Activated CD4-positive, alpha-beta T cell treated with anti-CD3 and anti-CD28 coated beads for 36 hours (primary cell): ENCODE measurements at regions of chr21 and their contacts with region 1.

Region 1: DNA sequence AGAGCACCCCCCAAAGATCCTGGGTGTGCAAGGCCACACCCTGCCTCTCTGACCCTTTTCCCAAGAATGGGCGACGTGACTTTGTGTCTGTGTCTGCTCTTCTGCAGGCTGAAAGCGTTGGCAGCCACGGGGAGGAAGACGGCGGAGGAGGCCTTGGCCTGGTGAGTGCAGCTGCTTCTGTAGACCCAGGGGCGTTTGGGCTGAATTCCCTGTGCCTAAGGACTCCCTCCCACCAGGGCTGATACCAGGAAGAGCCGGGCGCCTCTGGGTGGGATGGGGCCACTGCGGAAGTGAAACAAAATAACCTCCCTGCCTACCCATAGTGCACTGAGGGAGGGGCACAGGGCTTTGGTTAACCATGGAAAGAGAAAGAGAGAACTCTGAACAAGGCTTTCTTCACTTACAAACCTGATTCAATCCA is 2.5 kb downstream of the UBASH3A start:
- DNase-seq: peak; percentile 85
- ATAC-seq: peak; percentile 75
- H3K4me3 Mint-ChIP-seq: peak overlapping the region; percentile 99
- H3K27ac Mint-ChIP-seq: peak overlapping the region; percentile 98
- H3K4me1 Mint-ChIP-seq: peaks cover 42% of the 10 kb centered on the region
- H3K27me3 Mint-ChIP-seq: no peaks in the 10 kb centered on the region

Region 2: GRCh38 chr21:41316200-41317062 is 1089.8 kb before region 1 on chr21 and contains the start of gene FAM3B:
- CTCF ChIA-PET with region 1: no interaction called
- POLR2A ChIA-PET with region 1: no interaction called
- intact Hi-C with region 1: no loop called
- DNase-seq: peak; percentile 13
- ATAC-seq: no peak
- H3K4me3 Mint-ChIP-seq: no peak within 1 kb of the TSS
- H3K27ac Mint-ChIP-seq: no peak within 1 kb of the TSS
- H3K4me1 Mint-ChIP-seq: peaks cover 13% of the 10 kb centered on the region
- H3K27me3 Mint-ChIP-seq: peaks cover 30% of the 10 kb centered on the region
- total RNA-seq, gene FAM3B: not detected

Region 3: GRCh38 chr21:42187976-42188653 is 218.1 kb before region 1 on chr21:
- CTCF ChIA-PET with region 1: no interaction called
- POLR2A ChIA-PET with region 1: no interaction called
- intact Hi-C with region 1: no loop called
- DNase-seq: peak; percentile 88
- ATAC-seq: peak; percentile 93
- H3K4me3 Mint-ChIP-seq: peak overlapping the region; percentile 57
- H3K27ac Mint-ChIP-seq: peak overlapping the region; percentile 95
- H3K4me1 Mint-ChIP-seq: peaks cover 65% of the 10 kb centered on the region
- H3K27me3 Mint-ChIP-seq: peaks cover 2% of the 10 kb centered on the region

Region 4: GRCh38 chr21:42350896-42351543 is 55.2 kb before region 1 on chr21 and contains the start of gene TFF2:
- CTCF ChIA-PET with region 1: no interaction called
- POLR2A ChIA-PET with region 1: no interaction called
- intact Hi-C with region 1: no loop called
- DNase-seq: no peak
- ATAC-seq: no peak
- H3K4me3 Mint-ChIP-seq: no peak within 1 kb of the TSS
- H3K27ac Mint-ChIP-seq: no peak within 1 kb of the TSS
- H3K4me1 Mint-ChIP-seq: no peaks in the 10 kb centered on the region
- H3K27me3 Mint-ChIP-seq: no peaks in the 10 kb centered on the region
- total RNA-seq, gene TFF2: not detected

Region 5: GRCh38 chr21:42374864-42375492 is 31.2 kb before region 1 on chr21:
- CTCF ChIA-PET with region 1: interaction called, 6 read pairs
- POLR2A ChIA-PET with region 1: interaction called, 15 read pairs
- intact Hi-C with region 1: loop called in 1 of 2 experiments (anchors 5 kb)
- DNase-seq: peak; percentile 47
- ATAC-seq: peak; percentile 31
- H3K4me3 Mint-ChIP-seq: peak overlapping the region; percentile 57
- H3K27ac Mint-ChIP-seq: peak overlapping the region; percentile 92
- H3K4me1 Mint-ChIP-seq: peaks cover 50% of the 10 kb centered on the region
- H3K27me3 Mint-ChIP-seq: no peaks in the 10 kb centered on the region

Region 6: DNA sequence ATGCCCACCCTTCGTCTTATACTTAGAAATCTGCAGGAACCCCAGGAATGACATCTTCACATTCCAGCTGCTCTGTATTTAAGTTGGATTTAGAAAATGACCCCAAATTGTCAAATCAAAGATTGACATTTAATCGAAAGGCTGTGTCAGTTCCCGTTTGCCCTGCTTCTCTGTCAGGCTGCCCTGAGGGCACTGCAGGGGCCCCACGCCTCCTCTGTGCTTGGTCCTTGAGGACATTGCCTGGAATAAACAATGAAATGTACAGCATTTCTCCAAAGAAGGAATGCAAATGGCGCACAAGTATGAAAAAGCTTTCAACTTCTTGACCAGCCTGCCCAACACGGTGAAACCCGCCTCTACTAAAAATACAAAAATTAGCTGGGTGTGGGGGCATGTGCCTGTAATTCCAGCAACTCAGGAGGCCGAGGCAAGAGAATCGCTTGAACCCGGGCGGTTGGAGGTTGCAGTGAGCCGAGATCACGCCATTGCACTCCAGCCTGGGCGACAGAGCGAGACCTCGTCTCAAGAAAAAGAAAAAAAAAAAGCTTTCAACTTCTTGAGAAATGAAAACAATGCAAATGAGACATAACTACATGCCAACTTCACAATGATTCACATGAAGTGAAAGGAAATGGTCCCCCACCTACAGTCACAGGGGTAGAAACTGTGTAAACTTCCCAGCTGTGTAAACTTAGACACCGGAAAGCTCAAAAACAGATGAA is 13.3 kb before region 1 on chr21:
- CTCF ChIA-PET with region 1: interaction called, 17 read pairs
- POLR2A ChIA-PET with region 1: interaction called, 19 read pairs
- intact Hi-C with region 1: loop called (anchors 1 kb)
- DNase-seq: peak; percentile 69
- ATAC-seq: peak; percentile 94
- H3K4me3 Mint-ChIP-seq: peak overlapping the region; percentile 62
- H3K27ac Mint-ChIP-seq: peak overlapping the region; percentile 89
- H3K4me1 Mint-ChIP-seq: peaks cover 84% of the 10 kb centered on the region
- H3K27me3 Mint-ChIP-seq: no peaks in the 10 kb centered on the region

Region 7: GRCh38 chr21:42424914-42425541 is 18.8 kb after region 1 on chr21:
- CTCF ChIA-PET with region 1: interaction called, 56 read pairs
- POLR2A ChIA-PET with region 1: interaction called, 15 read pairs
- intact Hi-C with region 1: loop called (anchors 1 to 2 kb)
- DNase-seq: peak; percentile 78
- ATAC-seq: peak; percentile 55
- H3K4me3 Mint-ChIP-seq: peak overlapping the region; percentile 64
- H3K27ac Mint-ChIP-seq: peak overlapping the region; percentile 87
- H3K4me1 Mint-ChIP-seq: peaks cover 74% of the 10 kb centered on the region
- H3K27me3 Mint-ChIP-seq: no peaks in the 10 kb centered on the region

Region 8: DNA sequence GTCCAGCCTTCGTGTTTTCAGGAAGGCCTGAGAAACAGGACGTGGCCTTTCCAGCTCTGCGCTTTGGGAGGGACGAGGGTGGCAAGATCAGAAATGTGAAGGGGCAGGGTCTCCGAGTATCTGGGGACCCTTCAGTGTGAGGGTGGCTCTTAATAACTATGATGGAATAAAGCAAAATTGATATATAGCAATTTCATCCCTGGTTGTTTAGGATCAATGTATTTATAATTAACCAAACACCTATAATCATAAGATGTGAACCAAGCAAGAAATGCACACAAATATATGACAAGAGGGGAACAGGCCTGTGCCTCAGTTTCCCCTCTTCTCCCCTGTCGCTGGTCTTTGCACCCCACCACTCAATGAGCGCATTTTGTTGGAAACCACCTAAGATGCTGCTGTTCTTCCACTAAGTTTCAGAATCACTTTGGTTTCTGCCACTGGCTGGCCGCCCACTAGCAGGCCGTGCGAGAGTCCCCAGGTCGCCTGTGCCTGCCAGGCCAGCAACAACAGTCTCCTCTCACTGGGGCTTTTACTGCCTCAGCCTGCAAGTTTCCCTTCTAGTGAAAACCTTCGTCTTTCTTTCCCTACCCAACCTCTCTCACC is 34.1 kb after region 1 on chr21:
- CTCF ChIA-PET with region 1: no interaction called
- POLR2A ChIA-PET with region 1: no interaction called
- intact Hi-C with region 1: loop called in 1 of 2 experiments (anchors 2 kb)
- DNase-seq: peak; percentile 67
- ATAC-seq: peak; percentile 67
- H3K4me3 Mint-ChIP-seq: no peak overlapping the region
- H3K27ac Mint-ChIP-seq: peak overlapping the region; percentile 85
- H3K4me1 Mint-ChIP-seq: peaks cover 47% of the 10 kb centered on the region
- H3K27me3 Mint-ChIP-seq: no peaks in the 10 kb centered on the region

Region 9: GRCh38 chr21:42449296-42449927 is 43.2 kb after region 1 on chr21:
- CTCF ChIA-PET with region 1: interaction called, 5 read pairs
- POLR2A ChIA-PET with region 1: no interaction called
- intact Hi-C with region 1: loop called (anchors 2 to 5 kb)
- DNase-seq: no peak
- ATAC-seq: no peak
- H3K4me3 Mint-ChIP-seq: no peak overlapping the region
- H3K27ac Mint-ChIP-seq: peak overlapping the region; percentile 86
- H3K4me1 Mint-ChIP-seq: peaks cover 52% of the 10 kb centered on the region
- H3K27me3 Mint-ChIP-seq: no peaks in the 10 kb centered on the region

Region 10: DNA sequence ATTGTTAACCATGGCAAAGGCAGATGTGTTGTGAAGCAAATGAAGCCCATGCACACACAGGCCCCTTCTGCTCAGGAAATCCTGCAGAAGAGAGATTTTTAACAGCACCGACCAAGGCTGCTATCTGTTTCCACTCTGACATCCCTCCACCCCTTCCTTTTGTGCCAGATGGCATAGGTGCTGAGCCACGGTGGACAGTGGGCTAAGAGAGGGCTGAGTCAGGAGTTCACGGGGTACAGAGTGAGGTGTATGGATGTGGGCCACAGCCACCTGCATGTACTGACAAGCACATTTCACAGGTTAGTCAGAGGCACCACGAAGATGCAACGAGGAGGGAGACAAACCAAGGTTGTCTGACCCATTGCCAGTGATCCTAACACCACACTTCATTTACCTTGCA is 80.3 kb after region 1 on chr21:
- CTCF ChIA-PET with region 1: no interaction called
- POLR2A ChIA-PET with region 1: no interaction called
- intact Hi-C with region 1: no loop called
- DNase-seq: no peak
- ATAC-seq: no peak
- H3K4me3 Mint-ChIP-seq: no peak overlapping the region
- H3K27ac Mint-ChIP-seq: no peak overlapping the region
- H3K4me1 Mint-ChIP-seq: peaks cover 2% of the 10 kb centered on the region
- H3K27me3 Mint-ChIP-seq: peaks cover 5% of the 10 kb centered on the region

Region 11: DNA sequence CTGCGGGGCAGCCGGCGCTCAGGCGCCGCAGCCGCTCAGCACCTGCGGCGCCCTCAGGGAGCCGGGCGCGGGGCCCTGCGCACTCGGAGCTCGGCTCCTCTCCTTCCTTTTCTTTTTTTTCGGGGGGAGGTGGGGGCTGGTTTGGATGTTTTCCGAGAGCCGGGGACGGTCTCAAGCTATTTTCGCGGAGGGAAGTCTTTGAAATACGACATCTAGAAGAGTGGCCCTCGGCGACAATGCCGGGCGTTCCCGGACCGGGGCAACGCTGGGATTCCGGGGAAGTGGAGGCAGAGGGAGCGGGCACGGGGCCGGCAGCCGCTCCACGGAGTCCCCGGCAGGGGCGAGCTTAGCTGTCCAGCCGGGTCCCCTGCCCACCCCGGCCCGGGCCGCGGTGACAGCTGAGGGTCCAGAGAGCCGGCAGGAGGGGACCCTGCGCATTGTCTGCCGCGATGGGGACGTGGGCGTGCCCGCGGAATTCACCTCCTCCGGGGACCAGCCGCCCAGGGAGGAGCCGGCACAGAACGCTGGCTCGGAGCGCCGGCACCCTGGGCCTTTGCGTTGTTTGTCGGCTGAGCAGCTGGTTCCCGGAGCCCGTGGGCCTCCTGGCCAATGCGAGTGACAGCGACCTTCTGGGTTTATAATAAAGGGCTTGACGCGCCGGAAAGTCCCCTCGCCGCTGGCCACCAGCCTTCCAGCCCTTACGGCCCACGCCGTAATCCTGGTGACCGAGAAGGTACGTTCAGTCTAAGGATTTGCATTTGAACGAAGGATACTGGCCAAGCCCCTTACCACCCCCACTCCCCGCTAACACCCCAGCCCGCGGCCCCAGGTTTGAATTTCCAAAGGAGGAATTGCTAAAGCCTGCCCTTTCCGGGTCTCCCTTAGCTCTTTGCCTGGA is 108.0 kb after region 1 on chr21:
- CTCF ChIA-PET with region 1: no interaction called
- POLR2A ChIA-PET with region 1: no interaction called
- intact Hi-C with region 1: loop called in 1 of 2 experiments (anchors 5 kb)
- DNase-seq: peak; percentile 81
- ATAC-seq: peak; percentile 78
- H3K4me3 Mint-ChIP-seq: peak overlapping the region; percentile 81
- H3K27ac Mint-ChIP-seq: peak overlapping the region; percentile 82
- H3K4me1 Mint-ChIP-seq: peaks cover 13% of the 10 kb centered on the region
- H3K27me3 Mint-ChIP-seq: no peaks in the 10 kb centered on the region